Naive thymus-derived CD8-positive, alpha-beta T cell (primary cell): ENCODE measurements at regions of chr3 and their contacts with region 1.

Region 1: GRCh38 chr3:47299381-47300318 is 16.9 kb downstream of the KLHL18 start:
- DNase-seq: no peak
- ATAC-seq: no peak
- H3K4me3 Mint-ChIP-seq: no peak overlapping the region
- H3K27ac Mint-ChIP-seq: peak overlapping the region in 1 of 10 donors; percentile 37
- H3K4me1 Mint-ChIP-seq: peaks cover 27 to 47% (median 41%) of the 10 kb centered on the region in 4 donors
- H3K27me3 Mint-ChIP-seq: no peaks in the 10 kb centered on the region

Region 2: GRCh38 chr3:45783667-45784066 is 1516.0 kb before region 1 on chr3:
- POLR2A ChIA-PET with region 1: interaction called, 10 read pairs
- DNase-seq: no peak
- ATAC-seq: no peak
- H3K4me3 Mint-ChIP-seq: no peak overlapping the region
- H3K27ac Mint-ChIP-seq: no peak overlapping the region
- H3K4me1 Mint-ChIP-seq: peaks cover 0 to 2% (median 0%) of the 10 kb centered on the region in 4 donors
- H3K27me3 Mint-ChIP-seq: peaks cover 0 to 6% (median 0%) of the 10 kb centered on the region in 5 donors